WTC11 (cell line): ENCODE measurements at regions of chr18 and their contacts with region 1.

Region 1: GRCh38 chr18:63317982-63318881 is 1.3 kb downstream of the BCL2 start:
- DNase-seq: peak; percentile 85
- ATAC-seq: peak; percentile 76
- H3K4me3 Mint-ChIP-seq: peak overlapping the region; percentile 91
- H3K27ac Mint-ChIP-seq: no peak overlapping the region
- H3K4me1 Mint-ChIP-seq: peaks cover 24% of the 10 kb centered on the region
- H3K27me3 Mint-ChIP-seq: peaks cover 41% of the 10 kb centered on the region
- CTCF ChIP-seq: peak; percentile 62; the same call in 1 of the 2 replicates

Region 2: GRCh38 chr18:63016270-63016669 is 302.0 kb before region 1 on chr18:
- CTCF ChIA-PET with region 1: interaction called, 21 read pairs
- POLR2A ChIA-PET with region 1: no interaction called
- DNase-seq: peak; percentile 41
- ATAC-seq: peak; percentile 73
- H3K4me3 Mint-ChIP-seq: no peak overlapping the region
- H3K27ac Mint-ChIP-seq: no peak overlapping the region
- H3K4me1 Mint-ChIP-seq: peaks cover 4% of the 10 kb centered on the region
- H3K27me3 Mint-ChIP-seq: no peaks in the 10 kb centered on the region; the same call in 1 of the 2 replicates
- CTCF ChIP-seq: peak; percentile 76

Region 3: GRCh38 chr18:63025251-63026090 is 292.8 kb before region 1 on chr18:
- CTCF ChIA-PET with region 1: interaction called, 20 read pairs
- POLR2A ChIA-PET with region 1: interaction called, 4 read pairs
- DNase-seq: peak; percentile 57
- ATAC-seq: peak; percentile 89
- H3K4me3 Mint-ChIP-seq: no peak overlapping the region
- H3K27ac Mint-ChIP-seq: no peak overlapping the region
- H3K4me1 Mint-ChIP-seq: peaks cover 2% of the 10 kb centered on the region
- H3K27me3 Mint-ChIP-seq: peaks cover 17% of the 10 kb centered on the region
- CTCF ChIP-seq: no peak

Region 4: DNA sequence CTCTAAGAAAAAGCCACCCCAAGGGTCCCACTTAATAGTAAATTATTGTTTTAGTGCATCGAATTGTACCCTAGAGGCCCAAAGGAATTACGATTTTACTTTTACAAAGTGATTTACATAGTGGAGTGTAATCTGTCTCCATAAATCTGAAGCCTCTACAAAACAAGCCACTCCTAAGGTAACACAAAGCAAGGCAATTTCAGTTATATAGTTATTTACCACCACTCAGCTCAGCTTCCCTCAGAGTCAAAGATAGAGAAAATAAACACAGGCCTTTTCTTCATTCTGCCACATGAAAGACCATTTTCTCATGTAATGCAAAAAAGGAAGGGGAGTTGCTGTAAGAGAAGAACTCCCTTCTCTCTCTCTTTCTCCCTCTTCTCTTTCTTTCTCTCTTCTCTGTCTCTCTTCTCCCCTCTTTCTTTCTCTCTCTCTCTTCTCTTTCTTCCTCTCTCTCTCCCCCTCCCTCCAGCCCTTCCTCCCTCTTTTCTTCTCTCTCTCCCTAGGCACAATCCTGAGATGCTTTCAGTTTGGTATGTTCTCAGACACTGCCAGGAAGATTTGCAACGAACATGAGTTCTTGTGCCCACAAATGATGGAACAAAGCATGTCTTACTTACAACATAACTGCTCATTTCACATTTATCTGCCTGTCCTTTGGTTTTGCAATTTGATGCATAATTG is 263.2 kb before region 1 on chr18:
- CTCF ChIA-PET with region 1: no interaction called
- POLR2A ChIA-PET with region 1: no interaction called
- DNase-seq: no peak
- ATAC-seq: no peak
- H3K4me3 Mint-ChIP-seq: no peak overlapping the region
- H3K27ac Mint-ChIP-seq: no peak overlapping the region
- H3K4me1 Mint-ChIP-seq: peaks cover 8% of the 10 kb centered on the region
- H3K27me3 Mint-ChIP-seq: no peaks in the 10 kb centered on the region
- CTCF ChIP-seq: no peak

Region 5: DNA sequence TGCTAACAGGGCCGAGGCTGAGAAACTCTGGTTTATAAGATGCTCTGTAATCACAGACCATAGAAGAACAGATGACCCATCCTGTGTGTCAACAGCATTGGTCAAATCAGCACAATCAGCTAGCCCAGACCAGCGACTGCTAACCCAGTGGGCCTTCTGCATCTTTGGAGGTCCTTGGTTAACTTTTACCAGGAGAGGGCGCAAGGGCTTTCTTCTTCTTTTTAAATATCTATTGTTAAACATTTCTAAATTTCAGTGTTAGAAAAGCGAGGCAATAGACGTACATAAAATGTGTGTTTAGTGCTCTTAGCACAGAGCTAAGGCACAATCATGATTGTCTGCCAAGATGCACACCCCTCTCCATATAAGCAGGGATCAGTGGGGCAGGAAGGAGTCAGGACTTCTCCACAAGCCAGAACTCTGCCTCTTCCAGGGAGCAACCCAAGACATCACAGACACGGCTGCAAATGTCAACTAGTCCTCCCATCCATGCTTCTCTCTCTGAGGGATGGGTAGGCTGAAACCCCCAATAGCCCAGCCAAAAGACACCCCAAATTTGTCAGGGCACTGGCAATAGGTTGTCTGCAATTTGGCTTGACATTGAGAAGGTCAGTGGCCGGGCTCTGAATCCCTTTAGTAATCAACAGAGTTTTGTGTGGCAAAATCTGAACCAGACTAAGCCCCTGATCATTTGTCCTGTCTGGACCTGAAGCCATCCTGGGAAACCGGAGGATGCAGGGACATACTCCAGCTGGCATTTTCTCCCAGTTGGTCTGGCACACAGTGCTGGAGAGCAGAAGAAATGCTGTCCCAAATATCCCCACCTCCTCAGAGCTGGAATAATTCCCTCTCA is 186.9 kb before region 1 on chr18:
- CTCF ChIA-PET with region 1: interaction called, 16 read pairs
- POLR2A ChIA-PET with region 1: no interaction called
- DNase-seq: peak; percentile 45
- ATAC-seq: peak; percentile 86
- H3K4me3 Mint-ChIP-seq: no peak overlapping the region
- H3K27ac Mint-ChIP-seq: no peak overlapping the region
- H3K4me1 Mint-ChIP-seq: peaks cover 14% of the 10 kb centered on the region
- H3K27me3 Mint-ChIP-seq: no peaks in the 10 kb centered on the region
- CTCF ChIP-seq: peak; percentile 22

Region 6: GRCh38 chr18:63367053-63367953 is 49.1 kb after region 1 on chr18 and contains the start of gene KDSR:
- CTCF ChIA-PET with region 1: no interaction called
- POLR2A ChIA-PET with region 1: no interaction called
- DNase-seq: peak; percentile 94
- ATAC-seq: peak; percentile 90
- H3K4me3 Mint-ChIP-seq: peak within 1 kb of the TSS; percentile 93
- H3K27ac Mint-ChIP-seq: peak within 1 kb of the TSS; percentile 85
- H3K4me1 Mint-ChIP-seq: peaks cover 17% of the 10 kb centered on the region
- H3K27me3 Mint-ChIP-seq: no peaks in the 10 kb centered on the region
- CTCF ChIP-seq: no peak
- total RNA-seq, gene KDSR: 48.4 to 51.8 TPM (median 49.5 TPM) in 3 replicates